ENCODE measurements at regions of chr6 and their contacts with region 1.

Region 1: GRCh38 chr6:2931970-2932748 is 29.1 kb upstream of the SERPINB9 start:
- DNase-seq: peak; percentile 72 to 86 (median 78)
- ATAC-seq: peak; percentile 95 to 100 (median 99)
- H3K4me3 ChIP-seq: peak overlapping the region in 1 of 4 donors; percentile 22
- H3K27ac ChIP-seq: no peak overlapping the region
- H3K4me1 ChIP-seq: peaks cover 0 to 3% (median 0%) of the 10 kb centered on the region in 3 donors
- H3K27me3 ChIP-seq: no peaks in the 10 kb centered on the region
- CTCF ChIP-seq: peak; percentile 90 to 94 (median 92)

Region 2: GRCh38 chr6:2381872-2382661 is 550.1 kb before region 1 on chr6:
- intact Hi-C with region 1: no loop called
- DNase-seq: peak in 1 of 6 donors; percentile 24
- ATAC-seq: peak; percentile 55 to 87 (median 70)
- H3K4me3 ChIP-seq: no peak overlapping the region
- H3K27ac ChIP-seq: peak overlapping the region in 2 of 4 donors; percentile 24 to 55
- H3K4me1 ChIP-seq: no peaks in the 10 kb centered on the region
- H3K27me3 ChIP-seq: no peaks in the 10 kb centered on the region
- CTCF ChIP-seq: no peak

Region 3: DNA sequence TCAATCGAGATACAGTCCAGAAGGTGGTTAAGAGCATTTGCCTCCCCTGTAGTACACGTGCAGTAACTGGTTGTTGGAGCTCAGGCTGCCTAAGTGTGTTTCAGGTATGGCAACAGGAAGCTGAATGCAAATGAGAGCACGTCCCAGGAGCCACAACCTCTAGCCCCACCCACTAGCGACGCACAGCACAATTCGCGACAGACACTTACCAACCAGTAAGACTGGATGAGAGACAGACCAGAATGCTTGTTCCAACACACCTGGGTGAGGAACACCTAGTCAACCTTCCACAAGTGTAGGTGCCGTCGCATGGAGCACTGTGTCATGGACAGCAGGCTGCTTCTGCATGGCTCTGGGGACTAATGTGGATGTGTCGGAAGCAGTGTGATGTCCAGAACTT is 83.3 kb before region 1 on chr6:
- intact Hi-C with region 1: loop called in 2 of 3 experiments (anchors 5 kb)
- DNase-seq: no peak
- ATAC-seq: no peak
- H3K4me3 ChIP-seq: no peak overlapping the region
- H3K27ac ChIP-seq: no peak overlapping the region
- H3K4me1 ChIP-seq: peaks cover 8 to 21% (median 9%) of the 10 kb centered on the region in 3 donors
- H3K27me3 ChIP-seq: no peaks in the 10 kb centered on the region
- CTCF ChIP-seq: no peak

Region 4: GRCh38 chr6:2876210-2877056 is 55.7 kb before region 1 on chr6:
- intact Hi-C with region 1: no loop called
- DNase-seq: peak; percentile 58 to 82 (median 70)
- ATAC-seq: peak; percentile 76 to 87 (median 86)
- H3K4me3 ChIP-seq: peak overlapping the region; percentile 35 to 62 (median 44)
- H3K27ac ChIP-seq: peak overlapping the region; percentile 49 to 88 (median 78)
- H3K4me1 ChIP-seq: peaks cover 0 to 9% (median 0%) of the 10 kb centered on the region in 3 donors
- H3K27me3 ChIP-seq: no peaks in the 10 kb centered on the region
- CTCF ChIP-seq: no peak

Measured in pancreas (tissue), 10 donors.